GM13977 (cell line): ENCODE measurements at regions of chr4 and their contacts with region 1.

Region 1: DNA sequence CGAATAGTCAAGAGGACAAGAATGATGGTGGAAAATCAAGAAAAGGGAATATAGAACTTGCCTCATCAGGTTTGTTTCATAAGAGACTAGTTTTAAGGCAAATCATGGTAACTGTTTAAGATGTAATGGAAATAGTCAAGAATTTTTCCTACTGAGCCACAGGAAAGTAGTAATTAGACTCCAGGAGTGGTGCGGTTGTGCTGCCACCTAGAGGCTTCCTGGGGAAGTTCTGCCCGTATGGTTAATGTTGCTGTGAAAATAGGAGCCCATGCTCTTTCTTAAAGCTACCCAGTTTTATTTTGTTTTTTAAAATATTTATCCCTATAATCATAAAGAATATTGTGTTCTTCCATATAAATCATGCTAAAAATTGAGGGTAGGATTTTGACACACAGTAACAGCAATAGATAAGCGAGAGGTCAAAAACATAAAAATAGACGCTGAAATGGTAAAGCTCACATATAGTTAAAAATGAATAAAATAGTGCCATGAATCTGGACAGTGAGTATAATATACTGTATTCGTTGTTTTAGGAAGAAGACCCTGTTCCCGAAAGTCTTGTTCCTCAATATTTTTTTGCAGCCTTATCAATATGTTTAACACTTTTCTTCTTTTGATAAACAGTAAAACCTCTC is 87.0 kb downstream of the PHOX2B start:
- DNase-seq: peak; percentile 47
- CTCF ChIP-seq: peak; percentile 85

Region 2: DNA sequence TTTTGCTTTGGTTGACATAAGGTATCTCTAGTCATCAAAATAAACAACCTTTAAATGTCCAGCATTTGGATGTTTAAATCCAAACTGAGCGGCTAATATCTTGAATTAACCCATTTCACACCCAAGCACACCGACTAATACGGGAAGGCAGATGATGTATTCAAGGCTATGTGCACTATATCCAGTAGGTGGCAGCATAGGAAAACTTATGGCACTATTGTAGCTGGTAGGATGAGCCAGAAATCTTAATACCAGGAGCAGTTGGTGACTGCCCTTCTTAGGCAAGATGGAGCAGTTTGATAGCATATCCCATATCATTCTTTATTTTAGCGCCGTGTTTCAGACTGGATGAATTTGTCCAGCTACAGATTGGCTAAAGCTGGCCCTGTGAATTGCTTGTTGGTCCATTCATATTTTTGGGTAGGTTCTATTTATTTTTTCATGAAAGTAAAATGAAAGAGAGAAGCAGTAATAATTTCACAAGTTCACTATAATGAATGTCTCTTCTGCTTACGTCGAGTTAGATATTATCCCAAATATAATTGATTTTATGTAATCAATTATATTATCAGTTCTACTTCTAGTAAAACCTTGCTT is 380.4 kb before region 1 on chr4:
- in situ Hi-C with region 1: loop called (anchors 25 kb)
- DNase-seq: peak; percentile 80
- CTCF ChIP-seq: peak; percentile 76

Region 3: DNA sequence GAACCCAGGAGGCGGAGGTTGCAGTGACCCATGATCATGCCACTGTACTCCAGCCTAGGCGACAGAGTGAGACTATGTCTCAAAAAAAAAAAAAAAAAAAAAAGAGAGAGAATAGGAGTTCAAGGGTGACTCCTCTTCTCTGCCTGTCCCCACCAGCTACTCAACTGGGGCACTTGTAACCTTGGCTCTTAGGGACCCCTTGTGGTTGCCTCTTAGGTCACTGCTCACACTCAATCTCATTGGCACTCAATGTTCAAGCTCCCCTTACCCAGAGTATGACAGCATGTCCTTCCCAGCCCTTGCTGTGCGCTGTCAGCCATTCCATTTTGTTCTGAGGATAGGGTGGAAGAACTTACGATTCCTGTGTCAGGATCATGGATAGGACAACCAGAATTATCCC is 573.3 kb after region 1 on chr4:
- in situ Hi-C with region 1: no loop called
- DNase-seq: no peak
- CTCF ChIP-seq: peak; percentile 5